Activated CD8-positive, alpha-beta T cell treated with anti-CD3 and anti-CD28 coated beads, Interleukin-2, amount 10 ng/mL, durations not matched to agents 7 days and 5 days (primary cell): ENCODE measurements at regions of chr5 and their contacts with region 1.

Region 1: DNA sequence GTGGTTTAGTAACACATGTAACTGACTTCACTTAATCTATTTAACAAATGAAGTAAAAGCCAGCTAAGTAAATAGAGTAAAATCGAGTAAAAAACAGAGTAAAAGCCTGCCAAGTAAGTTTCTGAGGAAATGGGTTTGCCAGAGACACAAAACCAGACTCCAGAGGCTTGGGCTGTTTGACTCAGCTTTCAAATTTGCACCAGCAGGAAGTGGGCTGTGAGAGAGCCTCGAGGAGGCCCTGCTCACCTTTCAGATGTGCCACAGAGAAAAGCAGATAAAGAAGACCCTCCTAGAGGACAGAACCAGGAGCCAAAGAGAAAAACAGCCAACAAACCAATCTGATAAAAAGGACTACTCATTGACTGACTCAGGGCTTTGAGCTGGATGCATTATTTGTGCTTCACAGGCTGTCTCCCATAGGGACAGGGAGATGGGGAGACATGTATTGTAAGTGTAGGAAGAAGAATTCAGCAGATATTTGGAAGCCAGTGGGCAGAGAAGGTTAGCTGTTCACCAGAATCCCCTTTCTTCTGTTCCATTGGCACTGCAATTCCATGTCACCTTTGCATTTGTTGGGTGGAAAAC is 14.4 kb upstream of the AMACR start:
- DNase-seq: peak; percentile 73
- ATAC-seq: peak; percentile 97
- H3K4me3 Mint-ChIP-seq: peak overlapping the region; percentile 4
- H3K27ac Mint-ChIP-seq: peak overlapping the region; percentile 86
- H3K4me1 Mint-ChIP-seq: peaks cover 27% of the 10 kb centered on the region
- H3K27me3 Mint-ChIP-seq: no peaks in the 10 kb centered on the region

Region 2: DNA sequence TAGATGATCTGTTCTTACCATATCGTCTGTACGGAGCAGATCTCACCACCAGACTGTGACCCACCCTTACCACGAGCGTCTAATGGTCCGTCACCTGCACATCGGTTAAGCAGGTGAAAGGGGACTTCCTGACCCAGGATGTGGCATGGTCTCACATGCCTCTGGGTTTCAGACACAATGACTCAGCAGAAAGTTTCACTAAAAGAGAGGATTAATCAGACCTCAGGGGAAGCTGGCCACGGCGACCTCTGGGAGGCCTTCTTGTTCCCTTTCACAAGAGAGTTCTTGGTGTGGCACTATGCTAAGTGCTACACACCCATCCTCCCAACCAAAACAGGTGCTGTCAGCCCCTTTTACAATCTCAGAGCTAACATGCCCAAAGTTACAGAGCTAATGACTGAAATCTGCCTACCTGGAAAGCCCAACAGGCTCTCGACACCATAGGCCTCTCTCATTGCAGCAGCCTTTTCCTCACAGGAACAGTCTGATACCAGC is 172.1 kb before region 1 on chr5:
- CTCF ChIA-PET with region 1: no interaction called
- POLR2A ChIA-PET with region 1: no interaction called
- DNase-seq: peak; percentile 65
- ATAC-seq: peak; percentile 72
- H3K4me3 Mint-ChIP-seq: peak overlapping the region; percentile 40
- H3K27ac Mint-ChIP-seq: peak overlapping the region; percentile 74
- H3K4me1 Mint-ChIP-seq: peaks cover 9% of the 10 kb centered on the region
- H3K27me3 Mint-ChIP-seq: peaks cover 25% of the 10 kb centered on the region

Region 3: DNA sequence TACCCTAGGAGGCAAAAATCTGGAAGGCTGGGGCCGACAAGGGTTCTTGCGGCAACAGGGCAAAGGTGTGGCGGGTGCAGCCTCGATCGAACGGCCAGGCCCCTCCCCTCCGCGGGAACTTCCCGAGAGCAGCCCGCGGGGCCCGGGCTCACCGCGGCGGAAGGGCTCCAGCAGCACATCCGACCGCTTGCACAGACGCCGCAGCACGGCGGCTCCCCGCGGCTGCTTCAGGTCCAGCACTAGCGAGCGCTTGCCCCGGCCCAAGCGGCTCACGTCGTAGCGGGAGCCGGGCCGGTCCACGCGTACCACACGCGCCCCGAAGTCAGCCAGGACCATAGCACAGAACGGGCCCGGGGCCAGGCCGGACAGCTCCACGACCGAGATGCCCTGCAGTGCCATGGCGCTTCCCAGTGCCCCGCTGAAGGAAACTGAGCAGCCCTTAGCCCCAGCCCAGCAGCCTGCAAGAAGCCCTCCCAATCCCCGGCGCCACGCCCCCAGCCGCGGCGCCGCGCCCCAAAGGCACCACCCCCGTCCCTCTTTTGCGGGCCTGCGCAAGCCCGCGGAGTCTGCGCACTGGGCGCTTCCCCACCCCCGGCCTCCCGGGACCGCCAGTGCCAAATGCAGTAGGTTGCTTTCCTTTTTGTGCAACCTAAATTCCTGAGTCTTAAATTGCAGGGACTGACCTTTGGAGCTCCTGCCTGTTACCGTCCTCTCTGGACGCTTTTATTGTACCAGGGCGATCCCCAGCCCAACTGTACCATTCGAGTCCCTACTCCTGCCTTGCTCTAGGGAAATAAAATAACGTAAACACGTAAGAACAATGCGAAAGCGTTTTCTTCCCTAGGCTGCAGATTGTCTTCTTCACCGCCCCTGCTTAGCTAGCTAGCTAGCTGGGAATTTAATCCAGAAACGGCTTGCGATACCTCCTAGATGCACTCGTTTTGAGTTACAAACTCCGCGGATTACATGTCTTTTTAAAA is 14.3 kb before region 1 on chr5 and contains the start of gene AMACR:
- CTCF ChIA-PET with region 1: interaction called, 5 read pairs
- POLR2A ChIA-PET with region 1: interaction called, 14 read pairs
- DNase-seq: peak; percentile 88
- ATAC-seq: peak; percentile 91
- H3K4me3 Mint-ChIP-seq: peak within 1 kb of the TSS; percentile 79
- H3K27ac Mint-ChIP-seq: peak within 1 kb of the TSS; percentile 90
- H3K4me1 Mint-ChIP-seq: peaks cover 32% of the 10 kb centered on the region
- H3K27me3 Mint-ChIP-seq: peaks cover 2% of the 10 kb centered on the region
- total RNA-seq, gene AMACR: 6.5 to 6.9 TPM

Region 4: GRCh38 chr5:34053133-34053532 is 30.9 kb after region 1 on chr5:
- CTCF ChIA-PET with region 1: no interaction called
- POLR2A ChIA-PET with region 1: no interaction called
- DNase-seq: no peak
- ATAC-seq: no peak
- H3K4me3 Mint-ChIP-seq: no peak overlapping the region
- H3K27ac Mint-ChIP-seq: no peak overlapping the region
- H3K4me1 Mint-ChIP-seq: no peaks in the 10 kb centered on the region
- H3K27me3 Mint-ChIP-seq: no peaks in the 10 kb centered on the region